Activated CD4-positive, alpha-beta memory T cell treated with anti-CD3 and anti-CD28 coated beads for 36 hours (primary cell): ENCODE measurements at regions of chr10 and their contacts with region 1.

Region 1: DNA sequence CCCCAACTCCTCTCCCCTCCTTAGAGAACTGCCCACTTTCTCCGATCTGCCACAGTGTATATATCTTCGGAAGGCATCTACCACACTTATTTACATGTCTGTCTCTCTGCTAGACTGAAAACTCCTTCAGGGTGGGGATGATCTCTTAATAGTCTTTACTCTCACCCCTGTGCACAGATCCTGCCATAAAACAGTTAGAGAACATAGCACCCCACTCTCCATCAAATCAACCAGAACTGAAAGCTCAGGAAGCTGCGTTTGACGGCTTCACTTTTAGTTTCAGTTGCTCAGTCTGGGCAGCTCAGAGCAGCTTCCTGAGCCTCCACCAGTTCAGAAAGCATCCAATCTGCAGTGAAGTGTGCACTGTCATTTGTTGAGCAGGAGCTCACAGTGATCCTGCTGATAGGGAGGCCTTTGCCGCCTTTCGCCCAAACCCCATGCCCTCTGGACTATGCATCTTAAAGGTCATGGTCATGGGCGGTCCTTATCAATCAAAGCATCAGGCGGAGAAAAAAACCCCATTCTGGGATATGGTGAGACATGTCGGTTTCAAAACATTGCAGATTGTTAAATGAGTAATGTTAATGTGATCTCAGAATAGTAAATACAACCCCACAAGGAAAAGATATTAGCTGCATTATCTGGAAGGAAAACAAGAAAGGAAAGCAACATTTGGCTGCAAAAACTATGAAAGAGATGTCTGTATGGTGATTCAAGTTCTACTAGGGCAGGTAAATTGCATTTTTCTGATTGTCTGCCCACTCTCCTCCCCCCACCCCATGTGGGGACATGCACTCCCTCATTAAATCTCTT is 167.1 kb upstream of the ADO start:
- DNase-seq: peak; percentile 84
- H3K4me3 Mint-ChIP-seq: no peak overlapping the region
- H3K27ac Mint-ChIP-seq: no peak overlapping the region
- H3K4me1 Mint-ChIP-seq: peaks cover 26% of the 10 kb centered on the region
- H3K27me3 Mint-ChIP-seq: no peaks in the 10 kb centered on the region

Region 2: DNA sequence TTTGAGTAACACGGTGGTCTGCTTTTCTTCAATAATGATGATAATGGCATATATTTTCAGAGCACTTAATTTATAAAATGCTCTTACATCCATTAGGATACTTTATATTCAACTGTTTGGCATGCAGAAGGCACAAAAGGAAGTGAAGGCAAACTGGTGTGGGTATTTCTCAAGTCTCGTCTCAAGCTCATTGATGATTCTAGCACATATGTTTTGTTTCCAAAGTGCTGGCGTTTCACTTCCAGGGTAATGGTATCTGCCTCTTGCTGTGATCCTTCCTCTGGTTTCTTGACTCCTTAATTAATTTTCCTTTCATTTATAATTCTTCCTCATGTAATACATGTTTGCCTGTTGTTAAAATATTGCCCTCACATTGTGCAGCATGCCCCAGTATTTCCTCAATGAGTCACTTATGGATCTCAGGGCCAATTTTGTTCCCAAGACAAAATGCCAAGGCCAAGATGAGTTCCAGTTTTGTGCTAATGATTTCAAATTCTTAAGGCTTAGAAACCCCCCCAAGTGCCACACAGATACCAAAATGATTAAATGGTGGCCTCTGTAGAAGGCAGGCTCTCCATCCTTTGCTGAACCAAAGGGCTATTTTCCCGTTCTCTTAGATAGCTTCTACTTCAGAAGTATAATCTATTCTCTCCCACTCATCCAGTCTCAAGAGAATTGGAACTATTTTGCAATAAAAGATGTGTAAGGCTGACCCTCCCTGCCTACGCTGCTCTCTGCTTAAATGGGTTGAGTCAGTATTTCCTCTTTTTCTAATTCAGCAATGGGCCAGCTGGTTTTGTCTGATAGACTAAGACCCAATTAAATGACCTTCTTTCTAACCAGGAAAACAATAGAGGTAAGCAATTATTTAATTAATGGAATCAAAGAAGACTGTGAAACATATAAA is 92.0 kb before region 1 on chr10:
- CTCF ChIA-PET with region 1: no interaction called
- POLR2A ChIA-PET with region 1: no interaction called
- intact Hi-C with region 1: no loop called
- DNase-seq: no peak
- H3K4me3 Mint-ChIP-seq: no peak overlapping the region
- H3K27ac Mint-ChIP-seq: no peak overlapping the region
- H3K4me1 Mint-ChIP-seq: no peaks in the 10 kb centered on the region
- H3K27me3 Mint-ChIP-seq: no peaks in the 10 kb centered on the region

Region 3: DNA sequence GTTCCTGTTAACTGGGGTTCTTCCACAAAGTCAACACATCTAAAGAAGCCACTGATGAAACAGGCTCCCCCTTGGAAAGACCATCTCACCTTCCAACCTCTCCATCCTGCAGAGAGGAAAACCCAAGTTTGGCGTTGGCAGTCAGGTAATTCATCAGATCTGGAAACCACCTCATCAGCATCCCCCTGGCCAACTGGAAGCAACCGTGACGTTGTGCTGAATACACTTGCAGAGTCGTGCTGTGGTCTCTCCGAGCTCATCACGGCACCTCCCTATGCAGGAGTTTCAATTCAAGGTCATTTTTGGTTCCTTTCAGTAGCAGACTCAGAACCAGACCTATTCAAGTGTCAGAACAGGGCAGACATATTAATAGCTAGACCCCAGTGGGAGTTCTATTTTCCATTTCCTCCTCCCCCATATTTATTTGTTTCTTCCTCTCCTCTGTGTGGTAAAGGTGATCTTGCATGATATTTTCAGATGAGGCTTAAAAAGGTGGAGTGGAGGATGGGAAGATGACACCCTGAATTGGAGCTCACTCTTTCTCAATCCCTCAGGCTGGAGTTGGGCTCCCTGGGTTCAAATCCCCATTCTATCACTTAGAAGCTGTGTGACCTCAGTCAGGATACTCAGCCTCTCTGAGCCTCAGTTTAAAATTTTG is 18.0 kb after region 1 on chr10:
- CTCF ChIA-PET with region 1: interaction called, 4 read pairs
- POLR2A ChIA-PET with region 1: interaction called, 7 read pairs
- intact Hi-C with region 1: loop called (anchors 1 kb)
- DNase-seq: peak; percentile 72
- H3K4me3 Mint-ChIP-seq: no peak overlapping the region
- H3K27ac Mint-ChIP-seq: no peak overlapping the region
- H3K4me1 Mint-ChIP-seq: peaks cover 28% of the 10 kb centered on the region
- H3K27me3 Mint-ChIP-seq: no peaks in the 10 kb centered on the region

Region 4: DNA sequence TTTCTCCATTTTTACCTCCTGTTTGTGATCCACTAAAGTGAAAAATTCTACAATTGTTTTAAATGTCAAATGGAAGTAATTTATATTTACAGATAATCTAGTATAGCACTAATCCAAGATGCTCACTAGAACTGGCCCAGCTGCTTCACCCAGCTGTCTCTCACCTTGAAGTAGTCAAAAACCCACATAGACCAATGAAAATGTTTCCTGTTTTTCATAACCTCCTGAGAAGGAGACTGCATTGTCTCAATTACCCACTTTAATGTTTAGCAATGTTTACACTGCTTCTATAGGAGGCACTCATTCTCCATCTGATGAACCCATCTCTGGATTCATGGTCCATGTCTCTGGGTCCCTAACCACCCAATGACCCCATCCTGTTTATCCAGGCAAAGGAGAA is 110.9 kb after region 1 on chr10:
- CTCF ChIA-PET with region 1: interaction called, 7 read pairs
- POLR2A ChIA-PET with region 1: no interaction called
- intact Hi-C with region 1: loop called (anchors 1 kb)
- DNase-seq: no peak
- H3K4me3 Mint-ChIP-seq: peak overlapping the region; percentile 12
- H3K27ac Mint-ChIP-seq: peak overlapping the region; percentile 59
- H3K4me1 Mint-ChIP-seq: peaks cover 25% of the 10 kb centered on the region
- H3K27me3 Mint-ChIP-seq: no peaks in the 10 kb centered on the region